ENCODE measurements at regions of chr6 and their contacts with region 1.

Region 1: GRCh38 chr6:144284783-144285547 is at the start of gene UTRN:
- DNase-seq: peak; percentile 72
- H3K4me3 Mint-ChIP-seq: peak within 1 kb of the TSS; percentile 93
- H3K27ac Mint-ChIP-seq: peak within 1 kb of the TSS; percentile 67
- H3K4me1 Mint-ChIP-seq: no peaks in the 10 kb centered on the region
- H3K27me3 Mint-ChIP-seq: no peaks in the 10 kb centered on the region
- CTCF ChIP-seq: no peak
- total RNA-seq, gene UTRN: 89.4 and 109 TPM in 2 replicates

Region 2: GRCh38 chr6:144215932-144216667 is 68.9 kb before region 1 on chr6:
- CTCF ChIA-PET with region 1: interaction called, 7 read pairs
- intact Hi-C with region 1: loop called (anchors 5 kb)
- DNase-seq: peak; percentile 89
- H3K4me3 Mint-ChIP-seq: peak overlapping the region; percentile 80
- H3K27ac Mint-ChIP-seq: peak overlapping the region; percentile 99
- H3K4me1 Mint-ChIP-seq: peaks cover 16% of the 10 kb centered on the region
- H3K27me3 Mint-ChIP-seq: peaks cover under 1% of the 10 kb centered on the region
- CTCF ChIP-seq: peak; percentile 52

Region 3: DNA sequence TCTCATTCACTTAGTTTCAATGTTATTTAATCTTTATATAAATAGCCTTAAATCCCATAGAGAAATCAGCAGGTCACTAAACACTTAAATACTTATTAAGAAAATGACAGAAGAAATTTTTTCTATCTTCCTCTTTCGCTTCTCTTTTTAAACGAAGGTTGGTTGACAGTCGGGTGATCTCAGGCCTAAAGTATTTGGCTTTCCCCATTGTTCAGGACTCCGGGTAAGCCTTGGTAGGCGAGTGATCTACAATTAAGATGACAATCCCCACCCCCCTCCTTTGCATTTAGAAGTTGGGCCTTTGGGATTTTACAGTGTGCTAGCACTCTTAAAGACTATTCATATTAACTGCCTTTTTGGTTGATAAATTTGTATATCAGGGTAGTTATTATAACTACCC is 19.6 kb before region 1 on chr6:
- CTCF ChIA-PET with region 1: no interaction called
- intact Hi-C with region 1: loop called (anchors 2 kb)
- DNase-seq: peak; percentile 24
- H3K4me3 Mint-ChIP-seq: no peak overlapping the region
- H3K27ac Mint-ChIP-seq: peak overlapping the region; percentile 85
- H3K4me1 Mint-ChIP-seq: peaks cover 10% of the 10 kb centered on the region
- H3K27me3 Mint-ChIP-seq: no peaks in the 10 kb centered on the region
- CTCF ChIP-seq: no peak

Region 4: GRCh38 chr6:144434308-144434990 is 149.5 kb after region 1 on chr6:
- CTCF ChIA-PET with region 1: no interaction called
- intact Hi-C with region 1: no loop called
- DNase-seq: peak; percentile 3
- H3K4me3 Mint-ChIP-seq: no peak overlapping the region
- H3K27ac Mint-ChIP-seq: no peak overlapping the region
- H3K4me1 Mint-ChIP-seq: peaks cover 10% of the 10 kb centered on the region
- H3K27me3 Mint-ChIP-seq: no peaks in the 10 kb centered on the region
- CTCF ChIP-seq: no peak